ENCODE measurements at regions of chr17 and their contacts with region 1.

Region 1: GRCh38 chr17:47188876-47189731 is at the start of gene CDC27:
- DNase-seq: peak; percentile 98 to 100 (median 99)
- ATAC-seq: peak; percentile 97
- H3K4me3 ChIP-seq: peak within 1 kb of the TSS; percentile 92
- H3K4me3 Mint-ChIP-seq: peak within 1 kb of the TSS; percentile 89 to 97 (median 94)
- H3K27ac ChIP-seq: peak within 1 kb of the TSS; percentile 95
- H3K27ac Mint-ChIP-seq: peak within 1 kb of the TSS; percentile 48 to 96 (median 94)
- H3K4me1 ChIP-seq: peaks cover 9 to 31% of the 10 kb centered on the region in 2 donors
- H3K4me1 Mint-ChIP-seq: peaks cover 34 to 59% (median 41%) of the 10 kb centered on the region in 7 donors
- H3K27me3 ChIP-seq: no peaks in the 10 kb centered on the region
- H3K27me3 Mint-ChIP-seq: no peaks in the 10 kb centered on the region
- total RNA-seq, gene CDC27: 47.4 to 98.3 (median 67.2) TPM

Region 2: GRCh38 chr17:47099987-47100711 is 89.0 kb before region 1 on chr17:
- CTCF ChIA-PET with region 1: no interaction called
- POLR2A ChIA-PET with region 1: no interaction called
- intact Hi-C with region 1: loop called (anchors 2 kb)
- DNase-seq: peak; percentile 80 to 92 (median 88)
- ATAC-seq: peak; percentile 100
- H3K4me3 ChIP-seq: peak overlapping the region; percentile 87
- H3K4me3 Mint-ChIP-seq: peak overlapping the region; percentile 92 to 100 (median 97)
- H3K27ac ChIP-seq: peak overlapping the region; percentile 78
- H3K27ac Mint-ChIP-seq: peak overlapping the region; percentile 90 to 100 (median 96)
- H3K4me1 ChIP-seq: peaks cover 6 to 11% of the 10 kb centered on the region in 2 donors
- H3K4me1 Mint-ChIP-seq: peaks cover 7 to 38% (median 27%) of the 10 kb centered on the region in 7 donors
- H3K27me3 ChIP-seq: no peaks in the 10 kb centered on the region
- H3K27me3 Mint-ChIP-seq: peaks cover 0 to 3% (median 0%) of the 10 kb centered on the region in 5 donors

Region 3: GRCh38 chr17:47199627-47200324 is 10.7 kb after region 1 on chr17:
- CTCF ChIA-PET with region 1: interaction called, 4 read pairs
- POLR2A ChIA-PET with region 1: interaction called, 17 read pairs
- intact Hi-C with region 1: no loop called
- DNase-seq: peak in 4 of 9 donors; percentile 14 to 20 (median 18)
- ATAC-seq: peak; percentile 59
- H3K4me3 ChIP-seq: no peak overlapping the region
- H3K4me3 Mint-ChIP-seq: peak overlapping the region; percentile 1 to 68 (median 57)
- H3K27ac ChIP-seq: peak overlapping the region; percentile 39
- H3K27ac Mint-ChIP-seq: peak overlapping the region; percentile 34 to 94 (median 84)
- H3K4me1 ChIP-seq: peaks cover 14 to 17% of the 10 kb centered on the region in 2 donors
- H3K4me1 Mint-ChIP-seq: peaks cover 21 to 34% (median 33%) of the 10 kb centered on the region in 7 donors
- H3K27me3 ChIP-seq: no peaks in the 10 kb centered on the region
- H3K27me3 Mint-ChIP-seq: peaks cover 0 to 11% (median 0%) of the 10 kb centered on the region in 5 donors

Region 4: DNA sequence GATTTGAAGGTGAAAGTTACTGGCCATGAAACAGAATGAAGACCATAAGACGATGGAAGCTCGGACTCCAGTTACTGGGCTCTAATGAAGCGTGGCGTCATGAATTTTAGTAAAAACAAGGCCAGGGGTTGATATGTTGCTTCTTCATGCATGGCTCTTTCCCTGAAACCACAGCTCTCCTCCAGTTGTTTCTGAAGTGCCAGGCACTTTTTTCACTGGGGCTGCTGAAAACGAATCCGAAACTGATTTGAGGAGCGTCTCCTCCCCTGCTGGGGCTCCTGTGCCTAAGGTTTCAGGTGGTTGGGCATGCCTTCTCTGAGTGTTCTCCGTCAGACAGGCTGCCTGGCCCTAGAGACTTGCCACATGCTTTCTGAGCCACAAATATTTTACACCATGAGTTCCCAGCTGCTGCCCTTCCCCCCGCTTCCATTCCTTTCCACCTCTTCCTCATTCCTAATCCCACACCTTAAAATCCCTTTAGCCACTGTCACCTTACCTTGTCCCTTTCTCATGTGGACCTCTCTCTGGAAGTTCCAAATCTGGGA is 16.4 kb after region 1 on chr17:
- CTCF ChIA-PET with region 1: interaction called, 4 read pairs
- POLR2A ChIA-PET with region 1: interaction called, 17 read pairs
- intact Hi-C with region 1: loop called (anchors 1 kb)
- DNase-seq: peak in 8 of 9 donors; percentile 53 to 74 (median 66)
- ATAC-seq: peak; percentile 87
- H3K4me3 ChIP-seq: peak overlapping the region; percentile 30
- H3K4me3 Mint-ChIP-seq: peak overlapping the region; percentile 56 to 85 (median 79)
- H3K27ac ChIP-seq: peak overlapping the region; percentile 80
- H3K27ac Mint-ChIP-seq: peak overlapping the region; percentile 87 to 94 (median 93)
- H3K4me1 ChIP-seq: peaks cover 30 to 36% of the 10 kb centered on the region in 2 donors
- H3K4me1 Mint-ChIP-seq: peaks cover 29 to 59% (median 51%) of the 10 kb centered on the region in 7 donors
- H3K27me3 ChIP-seq: no peaks in the 10 kb centered on the region
- H3K27me3 Mint-ChIP-seq: no peaks in the 10 kb centered on the region

Region 5: DNA sequence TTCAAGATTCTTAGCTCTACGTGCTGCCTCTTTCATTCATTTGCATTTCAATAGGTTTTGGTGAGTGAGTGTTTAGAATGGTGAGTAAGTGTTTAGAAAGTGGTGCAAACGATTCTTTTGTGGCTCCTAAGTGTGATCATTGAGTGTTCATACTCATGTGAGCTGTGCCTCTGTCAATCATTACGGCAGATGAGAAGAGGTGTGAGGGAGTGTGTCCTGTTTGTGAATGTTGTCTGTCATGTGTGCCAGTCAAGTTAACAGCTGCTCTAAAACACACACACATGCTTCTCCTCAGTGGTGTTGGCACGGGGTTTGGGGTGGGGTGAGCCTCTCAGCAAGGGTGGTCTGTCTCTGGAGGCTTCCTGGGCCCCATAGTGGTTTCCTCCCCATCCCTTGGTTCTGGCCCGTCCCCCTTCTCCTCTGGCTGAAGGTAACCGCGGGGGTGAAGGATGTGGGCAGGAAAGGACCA is 31.5 kb after region 1 on chr17:
- CTCF ChIA-PET with region 1: interaction called, 3 read pairs
- POLR2A ChIA-PET with region 1: interaction called, 3 read pairs
- intact Hi-C with region 1: loop called in 1 of 2 experiments (anchors 5 kb)
- DNase-seq: no peak
- ATAC-seq: peak; percentile 71
- H3K4me3 ChIP-seq: no peak overlapping the region
- H3K4me3 Mint-ChIP-seq: peak overlapping the region in 1 of 10 donors; percentile 44
- H3K27ac ChIP-seq: no peak overlapping the region
- H3K27ac Mint-ChIP-seq: peak overlapping the region in 4 of 9 donors; percentile 3 to 87 (median 48)
- H3K4me1 ChIP-seq: peaks cover 19 to 46% of the 10 kb centered on the region in 2 donors
- H3K4me1 Mint-ChIP-seq: peaks cover 11 to 43% (median 22%) of the 10 kb centered on the region in 7 donors
- H3K27me3 ChIP-seq: no peaks in the 10 kb centered on the region
- H3K27me3 Mint-ChIP-seq: peaks cover 0 to 4% (median 0%) of the 10 kb centered on the region in 5 donors

Region 6: GRCh38 chr17:47323382-47324222 is 134.5 kb after region 1 on chr17 and contains the start of gene EFCAB13:
- CTCF ChIA-PET with region 1: no interaction called
- POLR2A ChIA-PET with region 1: interaction called, 3 read pairs
- intact Hi-C with region 1: loop called in 1 of 2 experiments (anchors 2 kb)
- DNase-seq: peak; percentile 55 to 84 (median 73)
- ATAC-seq: peak; percentile 91
- H3K4me3 ChIP-seq: peak within 1 kb of the TSS; percentile 93
- H3K4me3 Mint-ChIP-seq: peak within 1 kb of the TSS; percentile 92 to 100 (median 98)
- H3K27ac ChIP-seq: peak within 1 kb of the TSS; percentile 76
- H3K27ac Mint-ChIP-seq: peak within 1 kb of the TSS; percentile 91 to 99 (median 98)
- H3K4me1 ChIP-seq: peaks cover 0 to 3% of the 10 kb centered on the region in 2 donors
- H3K4me1 Mint-ChIP-seq: peaks cover 13 to 26% (median 22%) of the 10 kb centered on the region in 7 donors
- H3K27me3 ChIP-seq: no peaks in the 10 kb centered on the region
- H3K27me3 Mint-ChIP-seq: peaks cover 0 to 28% (median 0%) of the 10 kb centered on the region in 5 donors
- total RNA-seq, gene EFCAB13: 3.7 to 37.4 (median 19.9) TPM